Activated naive CD4-positive, alpha-beta T cell treated with anti-CD3 and anti-CD28 coated beads for 36 hours (primary cell): ENCODE measurements at regions of chr2 and their contacts with region 1.

Region 1: GRCh38 chr2:38508311-38509039 is 94.3 kb downstream of the HNRNPLL start:
- DNase-seq: peak; percentile 93
- H3K4me3 Mint-ChIP-seq: no peak overlapping the region
- H3K27ac Mint-ChIP-seq: no peak overlapping the region
- H3K4me1 Mint-ChIP-seq: no peaks in the 10 kb centered on the region
- H3K27me3 Mint-ChIP-seq: no peaks in the 10 kb centered on the region

Region 2: GRCh38 chr2:37982147-37982582 is 526.3 kb before region 1 on chr2:
- CTCF ChIA-PET with region 1: no interaction called
- intact Hi-C with region 1: loop called (anchors 1 kb)
- DNase-seq: peak; percentile 73
- H3K4me3 Mint-ChIP-seq: no peak overlapping the region
- H3K27ac Mint-ChIP-seq: no peak overlapping the region
- H3K4me1 Mint-ChIP-seq: peaks cover 6% of the 10 kb centered on the region
- H3K27me3 Mint-ChIP-seq: no peaks in the 10 kb centered on the region

Region 3: GRCh38 chr2:38274286-38275276 is 233.9 kb before region 1 on chr2:
- CTCF ChIA-PET with region 1: interaction called, 9 read pairs
- intact Hi-C with region 1: loop called (anchors 1 kb)
- DNase-seq: peak; percentile 53
- H3K4me3 Mint-ChIP-seq: no peak overlapping the region
- H3K27ac Mint-ChIP-seq: no peak overlapping the region
- H3K4me1 Mint-ChIP-seq: peaks cover 2% of the 10 kb centered on the region
- H3K27me3 Mint-ChIP-seq: no peaks in the 10 kb centered on the region

Region 4: DNA sequence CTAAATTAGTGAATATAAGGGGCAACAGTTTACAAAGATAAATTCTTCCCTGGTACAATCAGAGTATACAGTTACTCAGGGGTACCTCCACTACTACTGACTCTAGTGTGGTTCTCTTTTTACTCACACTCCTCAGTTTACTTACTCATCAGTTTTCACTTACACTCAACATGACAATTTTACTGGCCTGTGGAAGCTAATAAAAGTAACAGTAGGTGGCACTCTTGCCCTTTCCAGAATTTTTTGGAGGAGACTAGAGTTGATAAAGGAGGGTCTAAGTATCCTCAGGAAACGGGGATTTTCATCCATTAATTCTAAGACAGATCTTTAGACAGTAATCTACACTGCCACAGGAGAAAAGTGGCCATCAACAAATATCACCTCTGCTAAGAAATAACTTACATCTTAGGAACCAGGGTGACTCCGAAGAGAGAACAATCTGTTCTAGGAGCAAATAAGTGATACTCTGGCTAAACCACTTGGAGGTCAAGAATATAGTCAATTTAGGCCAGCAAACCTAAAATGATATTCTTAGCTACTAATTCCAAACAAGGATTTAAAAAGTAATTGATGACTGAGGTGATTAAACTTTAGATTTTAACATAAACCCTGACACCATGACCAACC is 192.7 kb before region 1 on chr2:
- CTCF ChIA-PET with region 1: interaction called, 85 read pairs
- intact Hi-C with region 1: loop called (anchors 1 kb)
- DNase-seq: peak; percentile 32
- H3K4me3 Mint-ChIP-seq: no peak overlapping the region
- H3K27ac Mint-ChIP-seq: no peak overlapping the region
- H3K4me1 Mint-ChIP-seq: peaks cover 12% of the 10 kb centered on the region
- H3K27me3 Mint-ChIP-seq: no peaks in the 10 kb centered on the region

Region 5: GRCh38 chr2:38498045-38498481 is 10.4 kb before region 1 on chr2:
- CTCF ChIA-PET with region 1: interaction called, 20 read pairs
- intact Hi-C with region 1: no loop called
- DNase-seq: no peak
- H3K4me3 Mint-ChIP-seq: no peak overlapping the region
- H3K27ac Mint-ChIP-seq: no peak overlapping the region
- H3K4me1 Mint-ChIP-seq: no peaks in the 10 kb centered on the region
- H3K27me3 Mint-ChIP-seq: peaks cover 5% of the 10 kb centered on the region

Region 6: DNA sequence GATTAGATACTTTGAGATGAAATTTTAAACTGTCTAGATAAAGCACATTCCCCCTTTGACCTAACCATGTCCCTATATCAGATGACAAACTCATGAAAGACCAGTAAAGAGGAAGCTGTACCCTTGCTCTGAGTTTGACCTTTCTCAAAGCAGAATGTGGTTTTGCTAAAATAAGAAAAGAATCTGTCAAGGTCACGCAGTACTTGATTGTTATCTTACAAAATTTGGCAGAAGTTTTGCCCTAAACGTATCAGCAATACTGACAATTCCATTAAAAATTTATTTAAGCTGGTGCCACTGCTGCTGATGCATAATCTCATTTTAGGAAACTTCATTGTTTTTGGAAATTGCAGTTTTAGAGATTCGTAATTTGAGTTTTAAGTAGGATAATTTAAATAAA is 126.2 kb after region 1 on chr2:
- CTCF ChIA-PET with region 1: no interaction called
- intact Hi-C with region 1: no loop called
- DNase-seq: no peak
- H3K4me3 Mint-ChIP-seq: no peak overlapping the region
- H3K27ac Mint-ChIP-seq: no peak overlapping the region
- H3K4me1 Mint-ChIP-seq: peaks cover 16% of the 10 kb centered on the region
- H3K27me3 Mint-ChIP-seq: no peaks in the 10 kb centered on the region